ENCODE measurements at regions of chr18 and their contacts with region 1.

Region 1: GRCh38 chr18:44035554-44035953 is 645.1 kb upstream of the SETBP1 start:
- DNase-seq: no peak
- H3K4me3 ChIP-seq: no peak overlapping the region
- H3K27ac ChIP-seq: no peak overlapping the region
- H3K4me1 ChIP-seq: no peaks in the 10 kb centered on the region
- H3K27me3 ChIP-seq: peaks cover 12% of the 10 kb centered on the region; the same call in 1 of the 2 replicates
- CTCF ChIP-seq: no peak

Region 2: GRCh38 chr18:43882358-43883055 is 153.0 kb before region 1 on chr18:
- CTCF ChIA-PET with region 1: no interaction called
- POLR2A ChIA-PET with region 1: interaction called, 16 read pairs
- intact Hi-C with region 1: no loop called
- DNase-seq: no peak
- H3K4me3 ChIP-seq: no peak overlapping the region
- H3K27ac ChIP-seq: no peak overlapping the region
- H3K4me1 ChIP-seq: no peaks in the 10 kb centered on the region
- H3K27me3 ChIP-seq: no peaks in the 10 kb centered on the region
- CTCF ChIP-seq: no peak